ENCODE measurements at regions of chr1 and their contacts with region 1.

Region 1: GRCh38 chr1:116485071-116485735 is 85.6 kb downstream of the CD58 start:
- DNase-seq: peak; percentile 78
- ATAC-seq: peak; percentile 87
- H3K4me3 ChIP-seq: no peak overlapping the region
- H3K27ac ChIP-seq: no peak overlapping the region
- H3K4me1 ChIP-seq: peaks cover 9% of the 10 kb centered on the region
- H3K27me3 ChIP-seq: no peaks in the 10 kb centered on the region
- CTCF ChIP-seq: peak; percentile 90
- POLR2A ChIP-seq: no peak
- RAD21 ChIP-seq: peak; percentile 87

Region 2: DNA sequence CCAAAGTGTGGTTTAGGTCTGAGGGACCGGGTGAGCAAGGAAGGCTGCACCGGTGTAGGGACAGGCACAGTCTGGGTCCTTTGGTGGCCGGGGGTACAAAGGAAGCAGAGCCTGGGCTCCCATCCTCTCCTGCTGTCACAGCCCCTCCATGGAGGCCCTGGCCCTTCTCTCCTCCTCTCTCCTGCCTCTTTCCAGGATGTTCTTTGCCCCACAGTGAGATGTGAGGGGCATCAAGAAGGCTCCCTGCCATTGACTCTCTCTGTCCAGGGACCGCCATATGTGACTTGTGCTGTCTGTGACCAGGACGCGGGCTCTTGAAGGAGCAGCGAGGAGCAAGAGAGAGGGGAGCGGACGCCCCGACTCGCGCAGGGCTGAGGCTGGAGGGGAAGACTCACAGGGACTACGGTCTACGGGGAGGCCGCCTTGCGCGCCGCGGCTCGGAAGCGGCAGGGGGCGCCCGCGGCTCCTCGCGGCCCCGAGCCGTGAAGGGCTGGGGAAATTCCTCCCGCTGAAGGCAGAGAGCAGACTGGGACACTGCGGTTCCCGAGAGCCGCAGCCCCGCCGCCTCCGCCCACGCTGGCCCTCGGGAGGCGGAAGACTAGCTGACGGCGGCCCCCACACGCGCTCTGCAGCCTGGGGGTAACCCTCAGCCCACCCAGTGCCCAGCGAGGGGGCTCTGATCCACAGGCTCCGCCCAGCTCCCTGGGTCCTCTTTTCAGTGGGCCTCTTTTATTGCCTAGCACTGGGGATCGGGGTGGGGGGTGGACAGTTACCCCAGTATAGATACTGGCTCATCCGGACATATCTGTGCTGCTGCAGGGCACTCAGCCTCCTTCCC is 333.2 kb before region 1 on chr1:
- CTCF ChIA-PET with region 1: interaction called, 38 read pairs
- POLR2A ChIA-PET with region 1: interaction called, 3 read pairs
- dilution Hi-C with region 1: no loop called
- in situ Hi-C with region 1: no loop called
- intact Hi-C with region 1: loop called (anchors 1 kb)
- DNase-seq: peak; percentile 51
- ATAC-seq: peak; percentile 100
- H3K4me3 ChIP-seq: peak overlapping the region; percentile 44
- H3K27ac ChIP-seq: no peak overlapping the region
- H3K4me1 ChIP-seq: no peaks in the 10 kb centered on the region
- H3K27me3 ChIP-seq: peaks cover 23% of the 10 kb centered on the region
- CTCF ChIP-seq: peak; percentile 87
- POLR2A ChIP-seq: no peak
- RAD21 ChIP-seq: peak; percentile 72

Region 3: DNA sequence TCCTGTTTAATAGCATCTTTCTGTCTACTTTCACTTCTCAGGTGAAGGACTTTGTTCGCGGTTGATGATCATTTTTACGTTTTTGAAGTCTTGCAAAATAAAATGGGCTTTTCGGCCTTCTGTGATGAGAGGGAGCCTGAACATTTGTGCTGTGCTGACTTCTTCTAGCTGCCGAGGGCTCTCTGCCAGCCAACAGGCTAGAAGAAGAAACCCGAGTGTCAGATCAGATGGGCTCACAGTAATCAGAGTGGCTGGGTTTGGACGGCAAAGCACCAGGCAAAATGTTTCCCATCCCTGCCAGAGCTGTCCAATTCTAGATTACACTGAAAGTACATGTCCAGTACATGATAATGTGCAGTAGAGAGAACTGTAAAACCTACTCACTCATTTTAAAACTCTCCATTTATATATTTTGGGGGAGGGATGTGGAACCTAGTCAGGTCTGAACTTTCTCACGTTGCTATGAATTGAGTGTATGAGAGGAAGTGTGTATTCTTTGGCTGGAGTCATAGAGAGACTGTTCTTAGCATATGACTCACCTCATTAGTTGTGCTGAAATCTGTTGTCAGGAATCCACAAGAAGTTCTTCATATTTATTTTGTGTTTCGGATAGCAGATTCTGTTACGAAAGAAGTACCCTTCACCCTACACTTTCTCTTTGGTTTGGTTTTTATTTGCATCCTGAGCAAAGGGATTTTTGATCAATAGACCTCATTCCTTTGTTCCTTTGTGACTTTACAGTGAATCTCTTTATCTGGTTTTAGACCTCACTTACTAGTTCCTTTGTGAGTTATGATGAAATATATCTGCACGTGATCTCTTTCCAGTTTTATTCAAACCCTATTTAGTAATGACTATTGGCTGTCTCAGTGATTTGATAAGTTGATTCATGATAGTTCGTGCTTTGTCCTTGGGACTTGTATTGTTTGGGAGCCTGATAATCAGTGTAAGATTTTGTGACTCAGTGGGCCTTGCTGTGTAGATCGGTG is 107.4 kb before region 1 on chr1:
- CTCF ChIA-PET with region 1: interaction called, 3 read pairs
- POLR2A ChIA-PET with region 1: no interaction called
- dilution Hi-C with region 1: no loop called
- in situ Hi-C with region 1: no loop called
- intact Hi-C with region 1: loop called (anchors 5 kb)
- DNase-seq: peak; percentile 96
- ATAC-seq: peak; percentile 21
- H3K4me3 ChIP-seq: peak overlapping the region; percentile 31; the same call in 1 of the 2 replicates
- H3K27ac ChIP-seq: peak overlapping the region; percentile 73
- H3K4me1 ChIP-seq: peaks cover 27% of the 10 kb centered on the region
- H3K27me3 ChIP-seq: no peaks in the 10 kb centered on the region
- CTCF ChIP-seq: no peak
- POLR2A ChIP-seq: no peak; the same call in 1 of the 2 replicates
- RAD21 ChIP-seq: no peak

Region 4: DNA sequence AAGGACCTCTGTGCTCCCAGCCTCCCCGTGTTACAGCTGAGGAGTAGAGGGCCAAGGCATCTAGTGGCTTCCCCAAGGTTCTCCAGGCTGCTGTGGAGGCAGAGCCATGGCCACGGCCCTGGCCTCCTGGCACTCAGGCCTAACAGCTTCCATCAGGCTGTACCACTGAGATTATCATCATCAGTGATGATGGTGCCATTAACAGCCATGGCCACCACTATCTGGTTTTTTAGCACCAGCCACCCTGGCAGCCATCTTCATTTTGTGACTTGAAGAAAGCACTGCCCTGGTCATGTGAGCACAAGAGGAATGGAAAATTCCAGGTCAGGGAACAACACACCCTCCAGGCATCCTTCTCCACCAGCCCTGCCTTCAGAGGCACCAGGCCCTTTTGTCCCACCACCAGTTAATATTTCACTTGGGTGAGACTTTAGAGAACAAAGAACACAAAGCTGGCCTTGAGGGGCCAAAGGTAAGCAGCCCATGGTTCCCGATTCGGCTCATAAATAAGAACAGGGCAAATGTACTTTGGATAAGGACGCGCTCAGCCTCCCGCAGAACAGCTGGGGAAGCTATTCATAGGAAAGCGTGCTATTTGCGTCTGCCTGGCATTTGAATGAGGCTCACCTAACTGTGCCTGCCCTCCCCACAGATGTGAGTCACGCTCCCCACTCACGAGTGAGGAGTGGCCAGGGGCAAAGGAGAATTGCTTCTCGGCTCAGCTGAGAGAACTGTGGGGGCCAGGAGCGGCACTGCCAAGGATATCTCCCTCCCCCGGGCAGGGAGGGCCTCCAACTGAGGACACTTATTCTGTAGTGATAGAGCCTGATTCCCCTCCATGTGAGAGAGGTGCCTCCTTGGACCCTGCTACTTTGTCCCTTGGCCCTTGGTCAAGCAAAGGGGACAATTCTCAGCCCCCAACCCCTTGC is 10.0 kb before region 1 on chr1:
- CTCF ChIA-PET with region 1: interaction called, 10 read pairs
- POLR2A ChIA-PET with region 1: no interaction called
- dilution Hi-C with region 1: no loop called
- in situ Hi-C with region 1: no loop called
- intact Hi-C with region 1: no loop called
- DNase-seq: no peak
- ATAC-seq: no peak
- H3K4me3 ChIP-seq: no peak overlapping the region
- H3K27ac ChIP-seq: no peak overlapping the region
- H3K4me1 ChIP-seq: no peaks in the 10 kb centered on the region; the same call in 1 of the 2 replicates
- H3K27me3 ChIP-seq: peaks cover 23% of the 10 kb centered on the region
- CTCF ChIP-seq: no peak
- POLR2A ChIP-seq: no peak
- RAD21 ChIP-seq: no peak